Activated CD4-positive, alpha-beta T cell treated with anti-CD3 and anti-CD28 coated beads, Interleukin-2, amount 10 ng/mL, durations not matched to agents 7 days and 5 days (primary cell): ENCODE measurements at regions of chr1 and their contacts with region 1.

Region 1: GRCh38 chr1:101371259-101371658 is 134.4 kb downstream of the S1PR1 start:
- DNase-seq: peak; percentile 35
- H3K4me3 Mint-ChIP-seq: no peak overlapping the region
- H3K27ac Mint-ChIP-seq: no peak overlapping the region
- H3K4me1 Mint-ChIP-seq: peaks cover 13% of the 10 kb centered on the region
- H3K27me3 Mint-ChIP-seq: peaks cover 13% of the 10 kb centered on the region

Region 2: DNA sequence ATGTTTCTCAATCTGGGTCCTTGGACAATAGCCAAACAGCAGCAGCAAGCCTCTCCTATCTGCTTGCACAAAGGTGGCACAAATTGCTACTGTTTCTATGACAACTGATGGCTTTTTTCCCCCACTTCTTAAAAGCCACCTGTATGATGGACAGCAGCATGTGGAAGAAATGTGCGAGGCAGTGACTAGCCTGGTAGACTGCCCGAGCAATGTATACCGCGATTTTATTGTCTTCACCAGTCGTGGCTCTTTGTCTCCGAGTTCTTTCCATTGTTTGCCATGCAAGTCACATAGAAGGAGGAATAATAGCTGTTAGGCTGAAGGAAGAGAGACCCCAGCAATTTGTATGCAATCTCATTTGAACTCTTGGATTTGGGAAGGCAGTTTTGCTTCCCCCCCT is 55.0 kb before region 1 on chr1:
- CTCF ChIA-PET with region 1: no interaction called
- POLR2A ChIA-PET with region 1: no interaction called
- DNase-seq: no peak
- H3K4me3 Mint-ChIP-seq: no peak overlapping the region
- H3K27ac Mint-ChIP-seq: no peak overlapping the region
- H3K4me1 Mint-ChIP-seq: peaks cover 32% of the 10 kb centered on the region
- H3K27me3 Mint-ChIP-seq: peaks cover 12% of the 10 kb centered on the region

Region 3: DNA sequence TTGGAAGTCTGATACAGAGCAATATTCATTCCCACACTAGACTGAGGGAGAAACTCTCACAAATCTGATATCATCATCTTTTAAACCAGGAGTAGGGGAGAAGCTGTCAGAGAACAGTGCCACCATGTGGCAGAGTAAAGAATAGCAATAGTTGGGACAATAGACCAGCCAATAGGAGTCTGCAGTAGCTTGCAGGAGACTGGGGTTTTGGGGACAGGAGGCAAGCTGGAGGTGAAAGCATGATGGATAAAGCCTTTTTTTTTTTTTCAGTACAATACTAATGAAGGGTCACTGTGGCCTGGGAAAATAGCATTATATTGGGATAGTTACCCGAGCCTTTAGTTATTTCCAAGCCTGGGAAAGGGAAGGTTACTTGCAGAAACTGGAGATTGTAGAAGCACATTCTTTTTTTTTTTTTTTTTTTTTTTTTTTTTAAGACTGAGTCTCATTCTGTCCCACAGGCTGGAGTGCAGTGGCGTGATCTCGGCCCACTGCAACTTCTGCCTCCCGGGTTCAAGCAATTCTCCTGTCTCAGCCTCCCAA is 13.7 kb before region 1 on chr1:
- CTCF ChIA-PET with region 1: interaction called, 12 read pairs
- POLR2A ChIA-PET with region 1: no interaction called
- DNase-seq: peak; percentile 85
- H3K4me3 Mint-ChIP-seq: no peak overlapping the region
- H3K27ac Mint-ChIP-seq: no peak overlapping the region
- H3K4me1 Mint-ChIP-seq: peaks cover 18% of the 10 kb centered on the region
- H3K27me3 Mint-ChIP-seq: peaks cover 9% of the 10 kb centered on the region